Activated naive CD4-positive, alpha-beta T cell treated with anti-CD3 and anti-CD28 coated beads for 36 hours (primary cell): ENCODE measurements at regions of chr16 and their contacts with region 1.

Region 1: DNA sequence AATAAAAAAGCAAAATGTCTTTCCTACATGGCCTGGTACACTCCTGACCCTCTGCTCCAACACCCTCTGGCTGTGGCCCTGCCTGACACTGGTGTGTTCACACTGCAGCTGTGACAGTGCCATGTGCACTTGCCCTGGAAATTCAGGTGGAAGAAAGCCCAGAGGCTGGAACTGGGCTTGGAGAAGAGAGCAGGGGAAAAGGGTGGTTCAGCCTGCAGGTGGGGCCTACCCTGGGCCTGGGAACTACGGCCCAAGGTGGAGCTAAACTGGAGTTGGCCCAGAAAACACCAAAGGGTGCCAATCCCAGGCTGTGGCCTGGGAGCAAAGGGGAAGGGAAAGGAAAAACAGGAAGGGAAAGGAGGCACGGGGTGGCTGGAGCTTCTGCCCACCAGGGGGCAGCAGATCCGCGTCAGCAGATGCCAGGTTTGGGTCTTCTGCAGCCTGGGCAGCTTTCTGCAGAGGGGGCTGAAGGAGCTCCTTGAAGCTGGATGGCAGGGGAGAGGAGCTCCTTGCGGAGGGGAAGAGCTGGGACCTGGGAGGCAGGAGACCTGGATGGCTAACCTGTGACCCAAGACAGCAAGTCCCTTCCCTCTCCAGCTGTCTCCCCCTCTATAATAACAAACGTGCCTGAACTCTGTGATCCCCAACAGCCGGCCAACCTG is 15.4 kb upstream of the CTCF start:
- DNase-seq: peak; percentile 81
- H3K4me3 Mint-ChIP-seq: peak overlapping the region; percentile 14
- H3K27ac Mint-ChIP-seq: peak overlapping the region; percentile 91
- H3K4me1 Mint-ChIP-seq: peaks cover 34% of the 10 kb centered on the region
- H3K27me3 Mint-ChIP-seq: no peaks in the 10 kb centered on the region

Region 2: GRCh38 chr16:67514382-67514828 is 32.5 kb before region 1 on chr16:
- CTCF ChIA-PET with region 1: interaction called, 12 read pairs
- intact Hi-C with region 1: no loop called
- DNase-seq: peak; percentile 95
- H3K4me3 Mint-ChIP-seq: no peak overlapping the region
- H3K27ac Mint-ChIP-seq: peak overlapping the region; percentile 77
- H3K4me1 Mint-ChIP-seq: peaks cover 6% of the 10 kb centered on the region
- H3K27me3 Mint-ChIP-seq: no peaks in the 10 kb centered on the region

Region 3: GRCh38 chr16:67613808-67614207 is 66.9 kb after region 1 on chr16:
- CTCF ChIA-PET with region 1: interaction called, 13 read pairs
- intact Hi-C with region 1: no loop called
- DNase-seq: peak; percentile 29
- H3K4me3 Mint-ChIP-seq: no peak overlapping the region
- H3K27ac Mint-ChIP-seq: no peak overlapping the region
- H3K4me1 Mint-ChIP-seq: peaks cover 4% of the 10 kb centered on the region
- H3K27me3 Mint-ChIP-seq: no peaks in the 10 kb centered on the region

Region 4: DNA sequence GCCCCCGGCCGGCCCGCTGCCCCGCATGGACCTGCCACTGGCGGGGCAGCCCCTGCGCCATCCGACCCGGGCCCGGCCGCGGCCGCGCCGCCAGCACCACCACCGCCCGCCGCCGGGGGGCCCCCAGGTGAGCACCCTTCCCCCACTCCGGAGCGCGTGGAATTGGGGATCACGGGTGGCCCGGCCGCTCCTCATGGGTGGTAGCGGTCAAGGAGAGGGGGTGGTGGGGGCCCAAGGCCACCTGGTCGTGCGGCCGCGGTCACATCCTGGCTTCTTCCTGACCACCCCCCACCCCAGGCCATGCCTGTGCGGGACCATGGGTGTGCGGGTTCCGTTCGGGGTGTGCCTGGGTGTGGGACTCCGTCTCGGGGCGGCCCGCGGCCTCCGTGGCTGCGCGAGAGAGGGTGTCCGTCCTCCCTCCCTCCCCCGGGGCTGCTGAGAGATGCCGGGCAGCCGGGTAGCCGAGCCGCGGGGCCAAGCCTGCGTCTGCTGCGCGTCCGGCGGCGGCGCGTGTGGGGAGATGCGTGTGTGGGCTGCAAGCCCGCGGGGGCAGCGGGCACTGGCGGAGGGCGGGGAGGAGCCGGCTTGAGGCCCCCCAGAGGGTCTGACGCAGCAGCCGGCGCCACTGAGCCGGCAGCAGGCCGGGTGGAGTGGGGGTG is 106.4 kb after region 1 on chr16:
- CTCF ChIA-PET with region 1: interaction called, 168 read pairs
- intact Hi-C with region 1: no loop called
- DNase-seq: no peak
- H3K4me3 Mint-ChIP-seq: no peak overlapping the region
- H3K27ac Mint-ChIP-seq: no peak overlapping the region
- H3K4me1 Mint-ChIP-seq: peaks cover 12% of the 10 kb centered on the region
- H3K27me3 Mint-ChIP-seq: no peaks in the 10 kb centered on the region

Region 5: GRCh38 chr16:67667817-67668494 is 121.1 kb after region 1 on chr16:
- CTCF ChIA-PET with region 1: interaction called, 34 read pairs
- intact Hi-C with region 1: loop called (anchors 1 kb)
- DNase-seq: peak; percentile 91
- H3K4me3 Mint-ChIP-seq: peak overlapping the region; percentile 90
- H3K27ac Mint-ChIP-seq: no peak overlapping the region
- H3K4me1 Mint-ChIP-seq: peaks cover 17% of the 10 kb centered on the region
- H3K27me3 Mint-ChIP-seq: no peaks in the 10 kb centered on the region